HEK293 (cell line): ENCODE measurements at regions of chr14 and their contacts with region 1.

Region 1: DNA sequence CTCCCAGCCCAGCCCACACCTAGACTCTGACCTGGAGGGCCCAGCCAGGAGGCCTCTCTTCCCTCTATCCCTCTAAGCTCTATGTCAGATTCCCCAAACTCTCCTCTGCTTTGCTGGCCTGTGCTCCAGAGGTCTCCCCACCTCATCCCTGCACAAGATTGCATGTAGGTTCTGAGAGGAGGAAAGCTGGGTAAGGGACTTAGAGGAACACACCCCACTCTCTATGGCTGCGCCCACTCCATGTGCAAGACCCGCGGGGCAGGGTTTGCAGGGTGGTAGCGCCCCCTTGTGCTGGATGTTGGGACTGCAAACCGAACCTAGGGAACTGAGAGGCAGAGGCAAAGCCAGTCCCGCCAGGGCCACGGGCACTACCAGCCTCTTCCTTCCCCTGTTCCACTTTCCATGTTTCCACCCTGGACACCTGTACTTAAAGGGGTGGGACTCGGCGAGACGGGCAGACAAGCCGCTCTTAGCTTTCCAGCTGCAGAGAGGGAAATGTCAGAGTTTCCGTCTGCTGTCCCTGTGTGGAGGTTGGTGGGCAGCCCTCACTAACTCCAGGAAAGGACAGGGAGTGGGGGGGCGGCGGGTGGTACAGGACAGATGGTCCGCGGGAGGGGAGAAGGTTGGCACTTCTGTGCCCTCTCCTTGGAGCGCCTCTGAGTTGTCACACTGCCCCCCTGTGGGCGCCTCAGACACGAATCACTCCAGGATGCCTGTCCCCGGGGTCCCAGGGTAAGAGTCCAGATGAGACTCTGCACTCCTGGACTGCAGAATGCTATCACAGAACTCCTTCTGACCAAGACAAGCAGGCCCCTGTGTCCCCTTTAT is 16.8 kb downstream of the MMP14 start:
- H3K4me3 ChIP-seq: peak overlapping the region; percentile 50
- H3K27ac ChIP-seq: no peak overlapping the region
- H3K4me1 ChIP-seq: no peaks in the 10 kb centered on the region
- CTCF ChIP-seq: peak; percentile 91

Region 2: GRCh38 chr14:22556990-22557623 is 296.0 kb before region 1 on chr14:
- CTCF ChIA-PET with region 1: interaction called, 48 read pairs
- POLR2A ChIA-PET with region 1: no interaction called
- H3K4me3 ChIP-seq: peak overlapping the region; percentile 39
- H3K27ac ChIP-seq: peak overlapping the region; percentile 28; the same call in 1 of the 2 replicates
- H3K4me1 ChIP-seq: peaks cover 3% of the 10 kb centered on the region; the same call in 1 of the 2 replicates
- CTCF ChIP-seq: peak; percentile 95

Region 3: GRCh38 chr14:22653012-22653621 is 200.0 kb before region 1 on chr14:
- CTCF ChIA-PET with region 1: interaction called, 31 read pairs
- POLR2A ChIA-PET with region 1: no interaction called
- H3K4me3 ChIP-seq: no peak overlapping the region
- H3K27ac ChIP-seq: no peak overlapping the region
- H3K4me1 ChIP-seq: peaks cover 5% of the 10 kb centered on the region; the same call in 1 of the 2 replicates
- CTCF ChIP-seq: peak; percentile 58

Region 4: DNA sequence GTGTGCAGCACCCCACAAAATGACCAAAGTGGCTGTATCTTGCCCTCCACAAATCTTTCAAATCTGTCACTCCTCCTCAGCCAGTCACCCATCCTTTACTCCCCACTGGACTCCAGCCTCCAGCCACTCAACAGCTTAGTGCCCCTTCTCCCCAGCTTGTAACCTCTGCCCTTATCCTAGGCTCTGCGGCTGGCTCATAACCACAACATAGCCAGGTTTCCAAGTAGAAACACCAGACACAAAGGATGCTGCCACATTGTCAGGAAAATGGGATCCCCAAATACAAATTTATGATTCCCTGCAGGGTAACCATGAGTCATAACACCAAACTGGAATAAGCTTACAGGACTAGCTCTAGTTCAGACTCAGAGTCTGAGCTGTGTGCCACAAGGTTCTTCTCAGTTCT is 71.6 kb before region 1 on chr14:
- CTCF ChIA-PET with region 1: interaction called, 34 read pairs
- POLR2A ChIA-PET with region 1: no interaction called
- H3K4me3 ChIP-seq: no peak overlapping the region
- H3K27ac ChIP-seq: no peak overlapping the region
- H3K4me1 ChIP-seq: no peaks in the 10 kb centered on the region
- CTCF ChIP-seq: no peak

Region 5: DNA sequence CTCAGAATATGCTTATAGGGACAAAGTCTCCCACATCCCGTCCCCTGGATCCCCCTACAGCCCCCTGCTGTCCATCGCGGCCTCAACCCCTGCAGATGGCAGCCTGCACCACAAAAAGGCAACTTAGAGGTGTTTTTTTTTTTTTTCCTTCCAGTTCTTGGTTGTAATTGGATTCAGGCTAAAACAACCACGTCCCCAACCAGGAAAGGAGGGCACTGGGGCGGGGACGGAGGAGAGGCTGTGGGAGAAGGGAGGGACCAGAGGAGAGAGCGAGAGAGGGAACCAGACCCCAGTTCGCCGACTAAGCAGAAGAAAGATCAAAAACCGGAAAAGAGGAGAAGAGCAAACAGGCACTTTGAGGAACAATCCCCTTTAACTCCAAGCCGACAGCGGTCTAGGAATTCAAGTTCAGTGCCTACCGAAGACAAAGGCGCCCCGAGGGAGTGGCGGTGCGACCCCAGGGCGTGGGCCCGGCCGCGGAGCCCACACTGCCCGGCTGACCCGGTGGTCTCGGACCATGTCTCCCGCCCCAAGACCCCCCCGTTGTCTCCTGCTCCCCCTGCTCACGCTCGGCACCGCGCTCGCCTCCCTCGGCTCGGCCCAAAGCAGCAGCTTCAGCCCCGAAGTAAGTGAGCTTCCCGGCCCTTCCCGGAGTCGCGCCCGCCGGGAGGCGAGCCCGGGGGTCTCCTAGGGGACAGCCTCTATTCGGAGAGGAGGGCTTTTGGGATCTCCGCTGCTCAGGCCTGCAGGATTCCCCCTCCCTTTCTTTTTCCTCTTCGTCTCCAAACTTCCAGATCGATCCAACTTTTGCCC is 16.6 kb before region 1 on chr14 and contains the start of gene MMP14:
- CTCF ChIA-PET with region 1: interaction called, 24 read pairs
- POLR2A ChIA-PET with region 1: interaction called, 5 read pairs
- H3K4me3 ChIP-seq: peak within 1 kb of the TSS; percentile 24
- H3K27ac ChIP-seq: peak within 1 kb of the TSS; percentile 24
- H3K4me1 ChIP-seq: no peaks in the 10 kb centered on the region
- CTCF ChIP-seq: no peak

Region 6: GRCh38 chr14:22872033-22872832 is 19.1 kb after region 1 on chr14:
- CTCF ChIA-PET with region 1: interaction called, 12 read pairs
- POLR2A ChIA-PET with region 1: no interaction called
- H3K4me3 ChIP-seq: peak overlapping the region; percentile 74
- H3K27ac ChIP-seq: peak overlapping the region; percentile 87
- H3K4me1 ChIP-seq: peaks cover 9% of the 10 kb centered on the region
- CTCF ChIP-seq: peak; percentile 86

Region 7: DNA sequence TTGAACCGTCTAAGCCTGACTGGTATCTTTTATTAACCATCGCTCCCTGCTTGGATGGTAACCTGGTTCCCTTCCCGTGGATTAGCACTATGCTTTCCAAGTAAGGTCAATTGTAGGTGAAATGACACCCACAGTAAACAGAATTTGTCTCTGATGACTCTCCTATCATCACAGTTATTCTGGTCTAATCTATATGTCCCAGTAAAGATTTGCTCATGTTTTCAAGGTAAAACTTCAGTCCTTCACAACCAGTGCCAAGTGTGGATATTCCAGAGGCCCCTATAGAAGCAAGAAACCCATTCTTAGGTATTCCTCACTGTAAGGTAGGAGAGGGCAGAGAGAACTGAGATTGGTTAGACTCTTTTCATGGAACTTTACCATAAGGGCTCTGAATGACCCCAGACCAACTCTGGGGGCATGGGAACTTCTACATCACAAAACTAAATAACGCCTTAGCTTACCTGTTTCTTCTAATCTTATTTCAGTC is 113.7 kb after region 1 on chr14:
- CTCF ChIA-PET with region 1: no interaction called
- POLR2A ChIA-PET with region 1: no interaction called
- H3K4me3 ChIP-seq: no peak overlapping the region
- H3K27ac ChIP-seq: no peak overlapping the region
- H3K4me1 ChIP-seq: peaks cover 5% of the 10 kb centered on the region; the same call in 1 of the 2 replicates
- CTCF ChIP-seq: no peak